PC-9 (cell line): ENCODE measurements at regions of chr2 and their contacts with region 1.

Region 1: GRCh38 chr2:200713003-200713703 is 98.6 kb upstream of the BZW1 start:
- DNase-seq: peak; percentile 86 to 98
- H3K4me3 ChIP-seq: peak overlapping the region; percentile 43; the same call in 1 of the 2 replicates
- H3K27ac ChIP-seq: peak overlapping the region; percentile 88
- H3K4me1 ChIP-seq: peaks cover 14% of the 10 kb centered on the region
- H3K27me3 ChIP-seq: no peaks in the 10 kb centered on the region
- CTCF ChIP-seq: peak; percentile 94

Region 2: GRCh38 chr2:200483729-200484198 is 229.4 kb before region 1 on chr2:
- CTCF ChIA-PET with region 1: no interaction called
- POLR2A ChIA-PET with region 1: no interaction called
- intact Hi-C with region 1: no loop called
- DNase-seq: peak; percentile 59 to 66
- H3K4me3 ChIP-seq: no peak overlapping the region
- H3K27ac ChIP-seq: no peak overlapping the region
- H3K4me1 ChIP-seq: peaks cover 43% of the 10 kb centered on the region
- H3K27me3 ChIP-seq: no peaks in the 10 kb centered on the region
- CTCF ChIP-seq: peak; percentile 58

Region 3: GRCh38 chr2:200735061-200735460 is 21.9 kb after region 1 on chr2:
- CTCF ChIA-PET with region 1: interaction called, 4 read pairs
- POLR2A ChIA-PET with region 1: no interaction called
- intact Hi-C with region 1: loop called (anchors 1 kb)
- DNase-seq: no peak
- H3K4me3 ChIP-seq: no peak overlapping the region
- H3K27ac ChIP-seq: no peak overlapping the region
- H3K4me1 ChIP-seq: peaks cover 10% of the 10 kb centered on the region
- H3K27me3 ChIP-seq: no peaks in the 10 kb centered on the region
- CTCF ChIP-seq: no peak

Region 4: GRCh38 chr2:200765139-200765951 is 52.2 kb after region 1 on chr2:
- CTCF ChIA-PET with region 1: interaction called, 3 read pairs
- POLR2A ChIA-PET with region 1: no interaction called
- intact Hi-C with region 1: loop called (anchors 1 kb)
- DNase-seq: peak; percentile 55 to 94
- H3K4me3 ChIP-seq: peak overlapping the region; percentile 16; the same call in 1 of the 2 replicates
- H3K27ac ChIP-seq: peak overlapping the region; percentile 94
- H3K4me1 ChIP-seq: peaks cover 67% of the 10 kb centered on the region
- H3K27me3 ChIP-seq: no peaks in the 10 kb centered on the region
- CTCF ChIP-seq: no peak

Region 5: DNA sequence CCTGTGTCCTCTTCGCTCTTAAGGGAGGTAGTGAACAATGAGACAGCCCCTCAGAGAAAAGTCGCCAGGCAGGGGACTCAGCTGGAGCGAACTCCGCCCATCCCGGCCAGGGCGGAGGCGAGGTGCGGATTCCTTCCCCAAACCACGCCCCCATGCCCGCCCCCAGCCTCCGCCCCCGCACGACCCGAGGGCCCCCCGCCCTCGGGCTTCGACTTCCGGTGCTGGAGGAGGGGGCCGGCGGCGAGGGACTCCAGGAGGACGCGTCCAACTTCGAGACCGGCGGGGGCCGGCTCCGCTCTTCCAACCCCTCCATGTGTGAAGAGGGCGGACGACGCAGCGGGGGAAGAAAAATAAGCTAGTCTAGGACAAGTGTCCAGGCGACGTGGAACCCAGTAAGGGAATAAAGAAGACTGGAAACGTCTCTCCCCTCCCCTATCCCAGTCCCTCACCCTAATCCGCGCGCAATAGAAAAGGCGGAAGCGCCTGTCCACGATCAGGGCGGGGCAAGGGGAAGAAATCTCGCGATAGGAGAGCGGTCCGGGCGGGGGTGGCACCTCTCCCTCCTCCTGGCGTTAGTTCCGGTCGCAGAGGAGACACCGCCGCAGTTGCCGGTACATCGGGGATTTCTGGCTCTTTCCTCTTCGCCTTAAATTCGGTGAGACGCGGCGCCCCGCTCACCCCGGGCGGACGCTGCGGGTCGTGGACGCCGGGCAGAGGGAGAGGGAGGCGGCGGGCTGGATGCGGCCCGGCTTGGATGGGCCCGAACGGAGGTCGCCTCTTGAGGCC is 98.4 kb after region 1 on chr2 and contains the start of gene BZW1:
- CTCF ChIA-PET with region 1: interaction called, 3 read pairs
- POLR2A ChIA-PET with region 1: interaction called, 28 read pairs
- intact Hi-C with region 1: loop called (anchors 1 kb)
- DNase-seq: peak; percentile 85 to 94
- H3K4me3 ChIP-seq: peak within 1 kb of the TSS; percentile 100
- H3K27ac ChIP-seq: peak within 1 kb of the TSS; percentile 93
- H3K4me1 ChIP-seq: peaks cover 42% of the 10 kb centered on the region
- H3K27me3 ChIP-seq: no peaks in the 10 kb centered on the region
- CTCF ChIP-seq: no peak
- total RNA-seq, gene BZW1: 274 and 300 TPM in 2 replicates

Region 6: GRCh38 chr2:200888704-200889625 is 175.8 kb after region 1 on chr2 and contains the starts of genes NIF3L1 and PPIL3:
- CTCF ChIA-PET with region 1: no interaction called
- POLR2A ChIA-PET with region 1: no interaction called
- intact Hi-C with region 1: loop called (anchors 1 kb)
- DNase-seq: peak; percentile 93 to 97
- H3K4me3 ChIP-seq: peak within 1 kb of the TSS; percentile 85
- H3K27ac ChIP-seq: peak within 1 kb of the TSS; percentile 96
- H3K4me1 ChIP-seq: peaks cover 14% of the 10 kb centered on the region
- H3K27me3 ChIP-seq: no peaks in the 10 kb centered on the region
- CTCF ChIP-seq: no peak
- total RNA-seq, gene NIF3L1: 27.3 and 45.6 TPM in 2 replicates
- total RNA-seq, gene PPIL3: 41.0 and 49.0 TPM in 2 replicates

Region 7: DNA sequence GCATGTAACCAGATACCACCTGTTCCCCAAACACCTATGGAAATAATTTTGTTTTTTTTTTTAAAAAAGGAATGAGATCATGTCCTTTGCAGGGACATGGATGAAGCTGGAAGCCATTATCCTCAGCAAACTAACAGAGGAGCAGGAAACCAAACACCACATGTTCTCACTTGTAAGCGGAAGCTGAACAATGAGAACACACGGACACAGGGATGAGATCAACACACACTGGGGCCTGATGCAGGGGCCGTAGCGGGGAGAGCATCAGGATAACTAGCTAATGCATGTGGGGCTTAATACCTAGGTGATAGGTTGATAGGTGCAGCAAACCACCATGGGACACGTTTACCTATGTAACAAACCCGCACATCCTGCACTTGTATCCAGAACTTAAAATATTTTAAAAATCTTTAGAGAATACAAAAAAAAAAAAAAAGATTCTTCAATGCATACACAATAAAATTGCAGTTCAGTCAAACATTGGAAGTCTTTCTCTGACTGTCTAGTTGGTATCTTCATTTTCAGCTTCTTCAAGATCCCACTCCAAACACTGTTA is 458.2 kb after region 1 on chr2:
- CTCF ChIA-PET with region 1: no interaction called
- POLR2A ChIA-PET with region 1: no interaction called
- intact Hi-C with region 1: loop called (anchors 5 kb)
- DNase-seq: no peak
- H3K4me3 ChIP-seq: no peak overlapping the region
- H3K27ac ChIP-seq: no peak overlapping the region
- H3K4me1 ChIP-seq: no peaks in the 10 kb centered on the region
- H3K27me3 ChIP-seq: no peaks in the 10 kb centered on the region
- CTCF ChIP-seq: no peak